ENCODE measurements at regions of chr10 and their contacts with region 1.

Region 1: GRCh38 chr10:102231357-102232318 is 5.5 kb downstream of the ELOVL3 start:
- DNase-seq: peak; percentile 40 to 85 (median 54)
- ATAC-seq: peak; percentile 73
- H3K4me3 ChIP-seq: peak overlapping the region; percentile 59
- H3K4me3 Mint-ChIP-seq: peak overlapping the region; percentile 77
- H3K27ac ChIP-seq: no peak overlapping the region
- H3K27ac Mint-ChIP-seq: no peak overlapping the region
- H3K4me1 ChIP-seq: peaks cover 28% of the 10 kb centered on the region
- H3K4me1 Mint-ChIP-seq: peaks cover 10% of the 10 kb centered on the region
- H3K27me3 ChIP-seq: peaks cover 38 to 50% of the 10 kb centered on the region in 2 experiments
- H3K27me3 Mint-ChIP-seq: peaks cover 83% of the 10 kb centered on the region
- CTCF ChIP-seq: peak; percentile 73

Region 2: DNA sequence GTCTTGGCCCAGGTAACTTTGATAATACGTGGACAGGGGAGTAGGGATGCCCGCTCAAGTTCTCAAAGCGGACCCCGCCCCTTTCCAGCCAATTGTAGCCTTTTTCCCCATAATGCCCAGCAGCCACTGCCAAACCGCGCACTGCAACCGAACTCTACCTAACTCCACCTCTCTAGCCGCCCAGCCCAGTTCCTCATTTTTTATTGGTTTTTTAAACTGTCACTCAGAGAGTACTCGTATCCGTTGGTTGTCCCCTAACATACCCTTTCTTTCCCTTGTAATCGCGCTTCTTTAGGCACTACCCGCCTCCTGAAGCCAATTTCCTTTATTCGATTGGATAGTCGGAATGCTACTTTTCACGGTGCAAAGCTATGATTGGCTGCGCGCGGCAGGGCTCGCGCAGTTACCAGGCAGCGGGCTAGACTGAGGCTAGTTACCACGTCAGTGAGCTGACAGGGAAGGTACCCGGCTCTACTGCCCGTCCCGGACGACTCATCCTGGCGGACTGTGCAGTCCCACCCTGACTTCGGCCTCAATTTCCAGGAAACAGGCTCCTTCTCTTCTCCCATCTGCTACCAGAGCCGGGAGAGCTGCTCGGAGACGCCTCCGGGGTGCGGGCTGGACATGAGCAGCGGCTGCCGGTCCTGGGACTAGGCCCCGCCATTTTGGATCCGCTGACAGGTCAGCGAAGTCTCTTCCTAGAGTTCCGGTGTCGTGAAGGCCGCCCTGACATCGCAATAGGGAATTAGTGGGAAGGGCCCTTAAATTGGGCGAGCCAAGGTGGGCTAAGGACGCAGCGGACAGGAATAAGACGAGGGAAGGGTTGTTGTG is 13.7 kb after region 1 on chr10 and contains the start of gene GBF1:
- CTCF ChIA-PET with region 1: interaction called, 79 read pairs
- POLR2A ChIA-PET with region 1: interaction called, 13 read pairs
- intact Hi-C with region 1: loop called in 1 of 2 experiments (anchors 1 kb)
- DNase-seq: peak; percentile 76 to 99 (median 84)
- ATAC-seq: peak; percentile 89
- H3K4me3 ChIP-seq: peak within 1 kb of the TSS; percentile 74
- H3K4me3 Mint-ChIP-seq: peak within 1 kb of the TSS; percentile 96
- H3K27ac ChIP-seq: peak within 1 kb of the TSS; percentile 84 to 88
- H3K27ac Mint-ChIP-seq: peak within 1 kb of the TSS; percentile 86
- H3K4me1 ChIP-seq: peaks cover 60% of the 10 kb centered on the region
- H3K4me1 Mint-ChIP-seq: peaks cover 58% of the 10 kb centered on the region
- H3K27me3 ChIP-seq: peaks cover 20 to 28% of the 10 kb centered on the region in 2 experiments
- H3K27me3 Mint-ChIP-seq: peaks cover 40% of the 10 kb centered on the region
- CTCF ChIP-seq: no peak
- total RNA-seq, gene GBF1: 28.8 to 30.9 TPM